H1 (cell line): ENCODE measurements at regions of chr1 and their contacts with region 1.

Region 1: DNA sequence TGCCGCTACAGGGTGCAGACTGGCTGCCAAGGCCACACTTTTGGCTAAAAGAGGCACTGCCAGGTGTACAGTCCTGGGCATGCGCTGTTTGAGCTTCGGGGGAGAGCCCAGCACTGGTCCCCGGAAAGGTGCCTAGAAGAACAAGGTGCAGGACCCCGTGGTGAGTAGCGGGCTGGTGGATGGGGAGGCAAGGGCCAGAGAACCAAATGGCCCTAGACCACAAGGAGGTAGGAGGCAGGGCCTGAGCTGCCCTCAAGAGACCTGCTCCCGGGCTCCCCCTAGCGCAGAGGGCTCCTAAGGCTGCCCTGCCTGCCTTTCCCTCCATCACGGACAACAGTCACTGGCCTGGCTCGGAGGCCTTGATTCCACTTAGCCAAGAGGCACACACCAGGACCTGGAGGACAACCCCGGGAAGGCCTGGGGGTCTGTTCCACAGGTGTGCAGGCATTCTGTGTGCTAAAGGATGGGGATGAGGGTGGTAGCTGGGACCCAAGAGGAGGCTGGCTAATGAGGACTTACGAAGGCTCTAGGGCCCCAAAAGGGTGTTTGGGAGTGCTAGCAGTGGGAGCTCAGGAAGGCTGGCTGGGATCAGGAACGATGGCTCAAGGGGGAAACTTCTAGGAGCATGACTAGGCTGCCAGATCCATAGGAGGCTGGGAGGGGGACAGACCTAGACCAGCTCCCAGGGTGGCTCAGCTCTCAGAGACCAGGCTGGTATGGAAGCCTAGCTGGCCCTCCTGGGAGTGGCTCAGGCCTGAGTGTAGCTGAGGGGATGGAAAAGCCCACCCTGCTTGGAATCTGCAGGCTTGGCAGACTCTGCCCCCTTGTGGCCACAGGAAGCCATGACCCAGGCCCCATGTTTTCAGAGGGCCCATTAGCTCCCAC is 742 bp downstream of the ARTN start:
- DNase-seq: peak; percentile 67 to 94
- H3K4me3 ChIP-seq: peak overlapping the region; percentile 57 to 67 (median 62)
- H3K27ac ChIP-seq: no peak overlapping the region
- H3K4me1 ChIP-seq: peaks cover 13 to 41% (median 35%) of the 10 kb centered on the region in 4 experiments
- H3K27me3 ChIP-seq: peaks cover 0 to 8% (median 4%) of the 10 kb centered on the region in 4 experiments; a peak in 5 of 7 replicates
- CTCF ChIP-seq: peak in 2 of 3 experiments; percentile 97 to 98; a peak in 3 of 4 replicates
- EP300 ChIP-seq: 0 out of 3 replicates have a peak, but pooled peaks of 1 of the 2 experiments have one; percentile 36
- POLR2A ChIP-seq: no peak
- RAD21 ChIP-seq: peak; percentile 92 to 97

Region 2: GRCh38 chr1:43706598-43707495 is 227.5 kb before region 1 on chr1:
- CTCF ChIA-PET with region 1: interaction called, 19 read pairs
- POLR2A ChIA-PET with region 1: interaction called, 9 read pairs
- DNase-seq: peak; percentile 77 to 90
- H3K4me3 ChIP-seq: peak overlapping the region; percentile 71 to 91 (median 84)
- H3K27ac ChIP-seq: peak overlapping the region; percentile 72
- H3K4me1 ChIP-seq: peaks cover 0 to 6% (median 5%) of the 10 kb centered on the region in 4 experiments; a peak in 6 of 7 replicates
- H3K27me3 ChIP-seq: no peaks in the 10 kb centered on the region
- CTCF ChIP-seq: no peak
- EP300 ChIP-seq: no peak
- POLR2A ChIP-seq: peak; percentile 53 to 91
- RAD21 ChIP-seq: no peak

Region 3: DNA sequence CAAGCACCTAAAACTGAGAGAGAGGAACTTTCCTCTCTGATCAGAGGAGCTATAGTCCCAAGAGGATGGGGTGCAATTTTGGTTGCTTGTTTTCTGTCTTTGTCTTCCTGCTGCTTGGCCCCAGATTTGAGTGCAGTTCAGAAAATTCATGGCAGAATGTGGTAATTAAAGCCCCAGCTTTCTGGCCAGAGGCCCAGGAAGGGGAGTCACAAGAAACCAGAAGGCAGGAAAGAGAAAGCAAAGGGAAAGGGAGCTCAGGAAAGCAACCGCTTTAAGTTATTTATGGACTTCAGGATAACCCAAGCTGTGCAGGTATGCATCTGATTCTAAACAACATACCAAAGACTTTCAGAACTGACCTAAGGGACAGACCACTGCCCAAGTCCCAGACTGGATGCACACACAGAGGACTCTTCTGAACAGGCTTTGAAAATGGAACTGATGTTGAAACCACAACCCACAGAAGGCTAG is 138.2 kb before region 1 on chr1:
- CTCF ChIA-PET with region 1: interaction called, 11 read pairs
- POLR2A ChIA-PET with region 1: interaction called, 3 read pairs
- DNase-seq: no peak
- H3K4me3 ChIP-seq: no peak overlapping the region
- H3K27ac ChIP-seq: no peak overlapping the region
- H3K4me1 ChIP-seq: no peaks in the 10 kb centered on the region
- H3K27me3 ChIP-seq: no peaks in the 10 kb centered on the region
- CTCF ChIP-seq: no peak
- EP300 ChIP-seq: no peak
- POLR2A ChIP-seq: no peak
- RAD21 ChIP-seq: no peak

Region 4: DNA sequence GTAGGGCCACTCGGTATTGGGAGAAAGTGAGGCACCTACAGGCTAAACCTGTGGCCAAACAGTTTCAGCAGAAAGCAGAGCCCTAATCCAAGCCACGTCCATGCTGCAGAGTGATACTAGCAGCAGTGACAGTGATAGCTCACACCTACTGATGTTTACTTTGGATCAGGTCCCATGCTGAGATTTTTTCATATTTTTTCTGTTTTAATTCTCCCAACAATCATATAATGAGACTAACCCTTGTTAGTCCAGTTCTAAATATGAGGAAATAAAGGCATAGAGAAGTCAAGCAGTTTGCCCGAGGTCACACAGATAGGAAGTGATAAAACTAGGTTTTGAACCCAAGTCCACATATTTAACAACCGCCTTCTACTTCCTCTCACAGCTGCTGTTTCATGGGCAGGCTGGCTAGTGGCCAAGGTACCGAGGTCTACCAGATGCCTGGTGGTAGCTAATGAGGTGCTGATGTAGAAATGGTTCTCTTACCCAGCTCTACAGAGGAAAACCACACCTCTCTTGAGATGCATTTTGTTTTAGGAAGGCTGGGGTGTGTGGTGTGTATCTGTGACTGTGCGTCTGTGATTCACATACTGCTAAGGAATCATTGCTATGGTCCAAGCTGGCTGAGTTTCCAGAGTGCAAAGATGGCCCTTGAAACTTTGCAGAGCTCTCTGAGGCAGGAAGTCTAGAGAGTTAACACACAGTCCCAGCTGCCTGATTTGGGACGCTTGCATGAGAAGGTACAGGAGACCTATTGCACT is 81.0 kb before region 1 on chr1:
- CTCF ChIA-PET with region 1: interaction called, 12 read pairs
- POLR2A ChIA-PET with region 1: interaction called, 3 read pairs
- DNase-seq: no peak
- H3K4me3 ChIP-seq: no peak overlapping the region
- H3K27ac ChIP-seq: no peak overlapping the region
- H3K4me1 ChIP-seq: peaks cover 0 to 7% (median 6%) of the 10 kb centered on the region in 4 experiments; a peak in 4 of 7 replicates
- H3K27me3 ChIP-seq: no peaks in the 10 kb centered on the region
- CTCF ChIP-seq: no peak
- EP300 ChIP-seq: no peak
- POLR2A ChIP-seq: no peak
- RAD21 ChIP-seq: no peak; a peak in 1 of 4 replicates

Region 5: GRCh38 chr1:43902058-43902831 is 32.1 kb before region 1 on chr1:
- CTCF ChIA-PET with region 1: interaction called, 126 read pairs
- POLR2A ChIA-PET with region 1: interaction called, 6 read pairs
- DNase-seq: no peak
- H3K4me3 ChIP-seq: no peak overlapping the region
- H3K27ac ChIP-seq: no peak overlapping the region
- H3K4me1 ChIP-seq: no peaks in the 10 kb centered on the region
- H3K27me3 ChIP-seq: no peaks in the 10 kb centered on the region
- CTCF ChIP-seq: no peak
- EP300 ChIP-seq: no peak
- POLR2A ChIP-seq: no peak
- RAD21 ChIP-seq: no peak

Region 6: GRCh38 chr1:43974443-43975248 is 40.3 kb after region 1 on chr1 and contains the start of gene ATP6V0B:
- CTCF ChIA-PET with region 1: interaction called, 18 read pairs
- POLR2A ChIA-PET with region 1: interaction called, 11 read pairs
- DNase-seq: peak; percentile 69 to 97
- H3K4me3 ChIP-seq: peak within 1 kb of the TSS; percentile 79 to 88 (median 82)
- H3K27ac ChIP-seq: peak within 1 kb of the TSS; percentile 85
- H3K4me1 ChIP-seq: peaks cover 6 to 18% (median 12%) of the 10 kb centered on the region in 4 experiments
- H3K27me3 ChIP-seq: no peaks in the 10 kb centered on the region
- CTCF ChIP-seq: peak in 1 of 3 experiments; percentile 3; a peak in 2 of 4 replicates
- EP300 ChIP-seq: no peak
- POLR2A ChIP-seq: peak in 1 of 2 experiments; percentile 73; a peak in 2 of 3 replicates
- RAD21 ChIP-seq: no peak
- total RNA-seq, gene ATP6V0B: 105 and 106 TPM in 2 replicates

Region 7: DNA sequence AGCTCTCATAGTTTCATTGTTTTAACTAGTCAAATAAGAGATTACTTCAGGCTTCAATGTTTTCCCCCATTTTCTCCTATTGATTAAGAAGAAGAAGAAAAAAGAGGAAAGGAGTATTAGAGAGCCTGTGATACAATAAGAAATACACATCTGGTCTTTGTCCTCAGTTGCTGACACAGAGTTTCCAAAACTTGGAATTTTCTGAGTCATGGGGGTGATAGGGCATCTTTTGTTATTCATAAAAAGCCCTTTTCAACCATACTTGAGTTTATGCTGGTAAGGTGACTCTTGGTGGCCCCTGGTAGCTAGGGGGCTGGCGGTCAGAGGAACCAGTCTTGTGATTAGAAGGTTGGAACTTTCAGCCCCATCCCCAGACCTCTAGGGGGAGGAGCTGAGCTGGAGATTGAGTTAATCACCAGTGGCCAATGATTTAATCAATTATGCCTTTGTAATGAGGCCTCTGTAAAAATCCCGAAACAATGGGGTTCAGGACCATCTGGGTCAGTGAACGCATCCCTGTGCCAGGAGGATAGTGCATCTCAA is 236.0 kb after region 1 on chr1:
- CTCF ChIA-PET with region 1: no interaction called
- POLR2A ChIA-PET with region 1: no interaction called
- DNase-seq: no peak
- H3K4me3 ChIP-seq: no peak overlapping the region
- H3K27ac ChIP-seq: no peak overlapping the region
- H3K4me1 ChIP-seq: no peaks in the 10 kb centered on the region; a peak in 1 of 7 replicates
- H3K27me3 ChIP-seq: no peaks in the 10 kb centered on the region
- CTCF ChIP-seq: peak in 2 of 3 experiments; percentile 13 to 26; a peak in 2 of 4 replicates
- EP300 ChIP-seq: no peak
- POLR2A ChIP-seq: no peak
- RAD21 ChIP-seq: peak; percentile 14 to 40; a peak in 3 of 4 replicates